ENCODE measurements at regions of chr2 and their contacts with region 1.

Region 1: DNA sequence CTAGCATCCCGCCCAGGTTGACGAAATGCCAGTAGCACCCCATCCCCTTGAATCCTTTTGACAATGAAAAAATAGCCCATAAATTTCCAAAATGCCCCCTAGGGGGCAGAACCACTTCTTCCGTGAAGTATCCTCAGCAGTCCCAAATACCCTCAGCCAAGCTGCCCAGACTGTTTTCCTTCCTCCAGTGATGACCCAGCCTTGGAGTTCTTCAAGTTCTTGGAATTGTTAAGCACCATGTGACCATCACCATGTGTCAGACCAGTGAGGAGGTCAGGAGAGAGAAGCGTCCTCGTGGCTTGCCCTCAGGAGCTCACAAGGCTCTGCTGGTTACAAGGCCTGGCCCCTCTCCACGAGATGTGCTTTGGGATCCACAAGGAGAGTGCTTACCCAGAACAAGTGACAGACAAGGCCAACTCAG is 1.4 kb upstream of the SLC23A3 start:
- DNase-seq: peak; percentile 38
- H3K4me3 ChIP-seq: no peak overlapping the region
- H3K27ac ChIP-seq: peak overlapping the region; percentile 43 to 79 (median 63)
- H3K4me1 ChIP-seq: peaks cover 5 to 36% (median 14%) of the 10 kb centered on the region in 4 donors
- H3K27me3 ChIP-seq: no peaks in the 10 kb centered on the region
- CTCF ChIP-seq: peak; percentile 63 to 75 (median 69)
- EP300 ChIP-seq: no peak
- POLR2A ChIP-seq: no peak

Region 2: GRCh38 chr2:219206442-219207253 is 35.4 kb after region 1 on chr2 and contains the start of gene ZFAND2B:
- in situ Hi-C with region 1: loop called in 2 of 4 experiments (anchors 5 to 10 kb)
- intact Hi-C with region 1: no loop called
- DNase-seq: peak; percentile 97
- H3K4me3 ChIP-seq: peak within 1 kb of the TSS; percentile 61 to 76 (median 71)
- H3K27ac ChIP-seq: peak within 1 kb of the TSS; percentile 93 to 99 (median 96)
- H3K4me1 ChIP-seq: peaks cover 7 to 21% (median 20%) of the 10 kb centered on the region in 4 donors
- H3K27me3 ChIP-seq: no peaks in the 10 kb centered on the region
- CTCF ChIP-seq: peak in 3 of 5 experiments; percentile 9 to 66 (median 61)
- EP300 ChIP-seq: no peak
- POLR2A ChIP-seq: peak; percentile 98
- total RNA-seq, gene ZFAND2B: 90.2 to 156 (median 119) TPM

Measured in transverse colon (tissue), 4 donors.